ENCODE measurements at regions of chr4 and their contacts with region 1.

Region 1: DNA sequence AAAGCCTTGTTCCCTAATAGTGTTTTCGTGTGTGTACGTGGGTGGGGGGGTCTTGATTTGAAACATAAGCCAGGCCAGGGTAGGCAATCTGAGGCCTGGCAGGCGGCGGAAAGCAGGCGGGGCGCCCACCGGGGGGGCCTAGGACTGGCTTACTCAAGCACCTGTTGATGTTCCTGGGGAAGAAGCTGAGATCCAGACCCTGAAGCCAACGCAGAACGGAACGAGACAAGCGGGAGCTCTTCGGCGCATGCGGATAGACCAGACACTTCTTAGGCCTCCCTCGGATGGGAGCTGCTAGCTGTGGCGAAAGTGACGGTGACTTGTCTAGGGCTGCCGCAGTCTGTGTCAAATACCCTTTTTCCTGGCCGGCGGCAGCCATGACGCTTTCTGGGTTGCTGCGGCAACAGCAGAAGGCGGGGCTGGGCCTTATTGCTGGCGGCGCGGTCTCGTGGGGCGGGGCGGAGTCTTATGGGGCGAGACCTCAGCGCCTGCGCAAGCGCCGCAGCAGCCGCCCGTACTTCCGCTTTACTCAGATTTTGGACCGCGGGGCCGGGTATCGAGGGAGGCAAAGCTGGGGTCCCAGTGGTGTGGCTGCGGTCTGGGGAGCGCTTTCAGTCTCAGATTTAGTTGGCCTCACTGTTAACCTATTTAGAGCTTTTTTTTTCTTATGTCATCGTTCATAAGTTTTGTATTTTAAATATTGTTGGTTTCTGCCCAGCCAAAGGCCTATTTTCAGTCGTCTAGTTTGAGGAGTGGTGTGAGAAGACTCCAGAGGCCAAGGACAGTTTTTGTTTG is at the start of gene SPATA4:
- DNase-seq: peak; percentile 97
- H3K4me3 ChIP-seq: peak within 1 kb of the TSS; percentile 44 to 68 (median 64)
- H3K27ac ChIP-seq: peak within 1 kb of the TSS; percentile 80 to 89 (median 84)
- H3K4me1 ChIP-seq: peaks cover 0 to 18% (median 13%) of the 10 kb centered on the region in 4 donors
- H3K27me3 ChIP-seq: no peaks in the 10 kb centered on the region
- CTCF ChIP-seq: no peak
- EP300 ChIP-seq: peak in 1 of 4 donors; percentile 29
- POLR2A ChIP-seq: peak; percentile 45 to 52
- total RNA-seq, gene SPATA4: 0.36 to 2.8 (median 0.54) TPM in 3 of 4 donors, not detected in the other

Region 2: DNA sequence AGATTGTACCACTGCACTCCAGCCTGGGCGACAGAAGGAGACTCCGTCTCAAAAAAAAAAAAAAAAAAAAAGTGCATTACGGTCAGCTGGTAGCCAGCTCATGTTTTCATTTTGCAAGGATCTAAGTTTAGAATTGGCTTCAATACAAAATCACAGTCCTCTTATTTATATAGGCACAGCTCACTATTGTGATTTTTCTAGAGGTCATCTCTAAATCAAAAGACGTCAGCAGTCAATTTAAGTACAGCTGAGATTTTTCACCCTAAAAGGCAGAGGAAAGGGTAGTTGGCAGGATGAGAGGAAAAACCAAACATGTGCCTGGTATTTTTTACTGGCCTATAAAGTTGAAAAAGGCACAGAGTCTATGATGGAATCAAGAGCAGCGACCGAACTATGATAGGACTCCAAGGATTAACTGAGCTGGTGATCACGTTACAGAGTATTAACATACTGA is 42.8 kb after region 1 on chr4:
- intact Hi-C with region 1: loop called (anchors 5 kb)
- DNase-seq: no peak
- H3K4me3 ChIP-seq: peak overlapping the region in 1 of 4 donors; percentile 9
- H3K27ac ChIP-seq: peak overlapping the region; percentile 83 to 90 (median 86)
- H3K4me1 ChIP-seq: peaks cover 0 to 65% (median 34%) of the 10 kb centered on the region in 4 donors
- H3K27me3 ChIP-seq: no peaks in the 10 kb centered on the region
- CTCF ChIP-seq: no peak
- EP300 ChIP-seq: peak; percentile 98 to 99 (median 98)
- POLR2A ChIP-seq: no peak

Region 3: GRCh38 chr4:176277162-176277904 is 82.0 kb after region 1 on chr4:
- intact Hi-C with region 1: loop called (anchors 10 kb)
- DNase-seq: peak; percentile 86
- H3K4me3 ChIP-seq: peak overlapping the region; percentile 1 to 28 (median 24)
- H3K27ac ChIP-seq: peak overlapping the region; percentile 8 to 74 (median 70)
- H3K4me1 ChIP-seq: peaks cover 0 to 24% (median 18%) of the 10 kb centered on the region in 4 donors
- H3K27me3 ChIP-seq: no peaks in the 10 kb centered on the region
- CTCF ChIP-seq: peak in 3 of 4 experiments; percentile 25 to 46 (median 30)
- EP300 ChIP-seq: no peak
- POLR2A ChIP-seq: no peak